CD4-positive, alpha-beta T cell (primary cell): ENCODE measurements at regions of chr3 and their contacts with region 1.

Region 1: DNA sequence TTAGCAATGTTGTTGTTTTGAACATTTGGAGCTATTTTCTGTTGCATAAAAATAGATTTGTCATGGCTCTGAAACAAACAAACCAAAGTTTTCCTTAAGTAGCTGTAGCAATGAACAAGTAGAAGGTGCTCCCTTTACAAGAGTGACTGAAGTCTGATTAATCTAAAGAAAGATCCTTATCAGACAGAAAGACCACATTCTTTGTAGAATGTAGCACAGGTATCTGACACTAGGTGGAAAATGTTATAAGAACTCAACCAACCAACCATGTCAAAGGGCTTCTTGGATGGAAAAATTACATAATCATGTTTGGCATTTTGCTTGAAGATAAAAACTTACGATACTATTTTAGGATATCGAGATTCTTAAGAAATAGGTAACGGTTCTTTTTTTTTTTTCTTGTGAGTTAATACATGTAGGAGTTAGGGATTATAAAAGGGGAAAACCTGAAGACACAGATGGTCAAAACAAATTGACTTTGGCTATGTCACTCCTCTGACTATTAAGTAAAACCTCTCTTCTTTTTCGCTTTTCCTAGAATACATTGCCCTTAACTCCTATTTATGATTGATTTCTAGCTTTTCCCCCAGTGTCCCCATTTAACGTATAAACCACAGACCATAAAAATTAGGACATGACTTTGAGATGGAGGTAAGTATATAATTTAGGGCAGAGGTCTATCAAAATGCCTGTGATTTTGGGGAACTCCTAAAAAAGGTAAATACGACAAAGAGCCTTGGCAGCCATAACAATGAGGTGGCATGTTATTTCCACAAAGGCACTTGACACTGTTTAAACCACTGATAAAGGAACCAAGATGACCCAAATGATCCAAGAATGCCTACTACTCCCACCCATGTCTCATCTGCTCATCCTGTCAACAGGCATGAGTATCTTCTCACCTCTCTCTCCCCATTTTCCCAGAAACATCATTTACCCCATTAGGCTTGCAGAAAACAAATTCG is 72.0 kb downstream of the CCR4 start:
- DNase-seq: peak in 3 of 14 experiments; percentile 63 to 70 (median 68)
- ATAC-seq: peak; percentile 93
- H3K4me3 ChIP-seq: no peak overlapping the region
- H3K4me3 Mint-ChIP-seq: peak overlapping the region; percentile 56
- H3K27ac ChIP-seq: peak overlapping the region in 1 of 2 donors; percentile 0
- H3K27ac Mint-ChIP-seq: peak overlapping the region; percentile 91
- H3K4me1 ChIP-seq: peaks cover 26% of the 10 kb centered on the region
- H3K4me1 Mint-ChIP-seq: peaks cover 63% of the 10 kb centered on the region
- H3K27me3 ChIP-seq: no peaks in the 10 kb centered on the region
- H3K27me3 Mint-ChIP-seq: no peaks in the 10 kb centered on the region
- CTCF ChIP-seq: peak; percentile 23

Region 2: DNA sequence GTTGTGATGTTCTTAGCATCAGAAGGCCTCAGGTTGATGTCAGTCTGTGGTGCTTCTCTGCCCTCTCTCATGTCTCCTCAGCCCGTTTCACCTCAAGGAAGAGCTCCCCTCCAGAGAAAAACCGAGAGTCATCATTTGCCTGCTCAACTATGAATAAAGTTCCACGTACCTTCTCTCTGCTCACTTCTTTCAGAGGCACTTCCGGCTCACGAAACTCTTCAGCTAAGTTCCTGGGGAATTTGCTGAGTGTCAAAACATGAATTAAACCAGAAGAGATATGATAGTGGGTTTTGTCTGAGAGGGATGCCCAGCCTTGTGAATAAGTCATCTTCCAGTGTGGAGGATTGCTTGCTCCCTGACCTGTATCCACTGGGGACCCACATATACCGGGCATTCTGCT is 34.3 kb before region 1 on chr3:
- CTCF ChIA-PET with region 1: no interaction called
- POLR2A ChIA-PET with region 1: no interaction called
- intact Hi-C with region 1: loop called in 1 of 2 experiments (anchors 5 kb)
- DNase-seq: peak in 2 of 14 experiments; percentile 28 to 32
- ATAC-seq: no peak
- H3K4me3 ChIP-seq: no peak overlapping the region
- H3K4me3 Mint-ChIP-seq: no peak overlapping the region
- H3K27ac ChIP-seq: no peak overlapping the region
- H3K27ac Mint-ChIP-seq: peak overlapping the region; percentile 45
- H3K4me1 ChIP-seq: peaks cover 32% of the 10 kb centered on the region
- H3K4me1 Mint-ChIP-seq: peaks cover 36% of the 10 kb centered on the region
- H3K27me3 ChIP-seq: no peaks in the 10 kb centered on the region
- H3K27me3 Mint-ChIP-seq: no peaks in the 10 kb centered on the region
- CTCF ChIP-seq: no peak